ENCODE measurements at regions of chr9 and their contacts with region 1.

Region 1: DNA sequence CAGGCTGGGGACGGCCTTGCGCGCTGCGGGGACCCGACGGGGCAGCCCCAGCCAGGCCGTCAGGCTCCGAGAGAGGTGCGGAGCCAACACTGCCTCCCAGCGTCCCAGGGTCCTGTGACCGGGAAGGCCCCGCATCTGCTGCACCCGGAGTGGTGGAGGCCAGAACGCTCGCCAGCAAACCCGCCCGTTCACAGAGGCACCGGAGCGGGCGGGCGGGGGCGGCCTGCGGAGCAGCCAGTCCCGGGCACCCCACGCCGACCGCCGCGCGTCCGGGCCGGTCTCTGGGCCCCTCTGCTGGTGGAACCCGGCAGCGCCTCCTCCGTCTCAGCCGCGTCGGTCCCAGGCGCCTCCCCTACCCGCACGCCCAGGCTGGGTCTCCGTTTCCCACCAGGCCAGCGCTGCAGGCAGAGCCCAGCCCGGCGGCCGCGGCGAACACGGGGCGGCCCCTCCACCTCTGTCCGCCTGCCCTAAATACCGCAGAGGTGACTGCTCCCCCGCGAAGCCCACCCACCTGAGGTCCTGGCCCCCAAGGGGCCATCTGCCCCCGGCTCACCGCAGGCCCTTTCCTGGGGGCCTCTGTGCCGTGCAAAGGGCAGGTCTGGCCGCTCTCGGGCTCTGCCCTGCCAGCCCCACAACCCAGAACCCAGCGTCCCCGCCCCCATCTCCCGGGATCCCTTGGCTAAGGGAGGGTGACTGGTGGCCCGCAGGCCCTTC is 15.9 kb downstream of the EXD3 start:
- DNase-seq: no peak
- H3K4me3 ChIP-seq: peak overlapping the region; percentile 44 to 60 (median 48)
- H3K27ac ChIP-seq: peak overlapping the region; percentile 13 to 63 (median 50)
- H3K4me1 ChIP-seq: peaks cover 29 to 36% (median 35%) of the 10 kb centered on the region in 4 donors
- H3K27me3 ChIP-seq: peaks cover 0 to 9% (median 0%) of the 10 kb centered on the region in 4 donors
- CTCF ChIP-seq: peak; percentile 68 to 80 (median 69)
- EP300 ChIP-seq: no peak
- POLR2A ChIP-seq: no peak

Region 2: DNA sequence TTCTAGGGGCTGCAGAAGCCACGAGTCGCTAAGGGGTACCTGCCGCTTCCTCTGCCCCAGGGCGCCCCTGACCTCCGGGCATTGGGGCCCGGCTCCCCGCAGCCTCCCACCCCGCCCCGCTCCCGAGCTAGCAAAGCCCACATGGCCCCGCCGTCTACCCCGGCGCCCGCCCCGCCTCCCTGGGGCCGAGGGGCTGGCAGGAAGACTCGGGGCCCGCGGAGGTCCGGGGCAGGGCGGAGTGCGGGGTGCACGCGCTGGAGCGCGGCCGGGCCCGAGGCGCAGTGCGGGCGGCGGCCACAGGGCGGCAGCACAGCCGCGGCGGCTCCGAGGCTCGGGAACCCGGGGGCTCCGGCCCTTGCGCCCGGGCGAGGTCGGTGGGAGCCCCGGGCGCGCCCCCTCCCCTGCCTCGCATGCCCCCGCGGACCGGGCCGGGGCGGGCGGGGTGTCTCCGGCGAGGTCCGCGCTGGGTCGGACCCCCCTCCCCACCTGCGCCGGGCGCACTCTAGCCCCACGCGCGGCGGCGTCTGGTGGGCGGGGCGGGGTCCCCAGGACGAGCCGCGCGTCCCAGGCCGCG is 111.7 kb before region 1 on chr9:
- intact Hi-C with region 1: loop called (anchors 5 kb)
- DNase-seq: no peak
- H3K4me3 ChIP-seq: peak overlapping the region; percentile 45 to 66 (median 50)
- H3K27ac ChIP-seq: peak overlapping the region in 2 of 4 donors; percentile 71 to 78
- H3K4me1 ChIP-seq: peaks cover 27 to 56% (median 39%) of the 10 kb centered on the region in 4 donors
- H3K27me3 ChIP-seq: peaks cover 4 to 92% (median 55%) of the 10 kb centered on the region in 4 donors
- CTCF ChIP-seq: peak; percentile 46 to 81 (median 80)
- EP300 ChIP-seq: no peak
- POLR2A ChIP-seq: no peak

Region 3: GRCh38 chr9:137618105-137619067 is 211.4 kb after region 1 on chr9 and contains the start of gene EHMT1:
- intact Hi-C with region 1: no loop called
- DNase-seq: no peak
- H3K4me3 ChIP-seq: peak within 1 kb of the TSS; percentile 81 to 99 (median 90)
- H3K27ac ChIP-seq: peak within 1 kb of the TSS; percentile 86 to 94 (median 92)
- H3K4me1 ChIP-seq: peaks cover 38 to 61% (median 52%) of the 10 kb centered on the region in 4 donors
- H3K27me3 ChIP-seq: no peaks in the 10 kb centered on the region
- CTCF ChIP-seq: no peak
- EP300 ChIP-seq: no peak
- POLR2A ChIP-seq: peak; percentile 7
- total RNA-seq, gene EHMT1: 71.6 to 78.2 (median 74.2) TPM

Measured in esophagus muscularis mucosa (tissue), 4 donors.